ENCODE measurements at regions of chr20 and their contacts with region 1.

Region 1: GRCh38 chr20:33791959-33792597 is 19.1 kb upstream of the CHMP4B start:
- DNase-seq: peak in 2 of 5 donors; percentile 43 to 75
- ATAC-seq: peak in 1 of 4 donors; percentile 24
- H3K4me3 ChIP-seq: no peak overlapping the region
- H3K27ac ChIP-seq: peak overlapping the region in 8 of 12 donors; percentile 26 to 78 (median 60)
- H3K4me1 ChIP-seq: peaks cover 0 to 39% (median 28%) of the 10 kb centered on the region in 12 donors
- H3K27me3 ChIP-seq: no peaks in the 10 kb centered on the region
- CTCF ChIP-seq: peak; percentile 70 to 83 (median 78)
- POLR2A ChIP-seq: no peak

Region 2: GRCh38 chr20:33731693-33732165 is 60.3 kb before region 1 on chr20 and contains the start of gene ZNF341:
- intact Hi-C with region 1: no loop called
- DNase-seq: peak; percentile 88 to 94 (median 92)
- ATAC-seq: peak; percentile 72 to 91 (median 88)
- H3K4me3 ChIP-seq: peak within 1 kb of the TSS; percentile 47 to 71 (median 64)
- H3K27ac ChIP-seq: peak within 1 kb of the TSS; percentile 86 to 99 (median 92)
- H3K4me1 ChIP-seq: peaks cover 0 to 29% (median 20%) of the 10 kb centered on the region in 12 donors
- H3K27me3 ChIP-seq: no peaks in the 10 kb centered on the region
- CTCF ChIP-seq: peak; percentile 82 to 97 (median 90)
- POLR2A ChIP-seq: no peak
- total RNA-seq, gene ZNF341: 1.2 to 3.3 (median 1.5) TPM

Region 3: DNA sequence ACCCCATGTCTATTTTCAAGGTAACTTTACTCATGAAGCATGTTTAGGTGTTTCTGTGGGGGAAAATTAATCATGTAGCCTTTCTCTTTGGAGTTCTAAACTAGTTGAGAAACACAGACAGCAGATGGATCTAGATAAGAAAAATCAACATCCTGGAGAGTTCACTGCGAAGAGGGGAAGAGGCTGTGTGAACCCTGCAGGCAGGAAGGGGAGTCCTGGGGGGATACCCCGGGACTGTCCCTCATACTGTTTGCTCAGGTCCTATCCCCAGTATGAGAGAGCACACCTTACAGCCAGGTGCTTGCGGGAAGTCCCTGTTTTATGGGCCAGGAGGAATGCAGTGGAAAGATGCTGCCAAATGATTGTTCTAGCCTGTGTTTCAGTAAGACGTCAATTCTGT is 51.8 kb after region 1 on chr20:
- intact Hi-C with region 1: loop called in 1 of 10 experiments (anchors 10 kb)
- DNase-seq: peak in 1 of 5 donors; percentile 7
- ATAC-seq: peak in 1 of 4 donors; percentile 27
- H3K4me3 ChIP-seq: no peak overlapping the region
- H3K27ac ChIP-seq: peak overlapping the region in 1 of 12 donors; percentile 17
- H3K4me1 ChIP-seq: peaks cover 26 to 84% (median 75%) of the 10 kb centered on the region in 12 donors
- H3K27me3 ChIP-seq: no peaks in the 10 kb centered on the region
- CTCF ChIP-seq: no peak
- POLR2A ChIP-seq: no peak

Region 4: GRCh38 chr20:33853507-33853813 is 61.4 kb after region 1 on chr20:
- intact Hi-C with region 1: loop called in 3 of 10 experiments (anchors 5 to 10 kb)
- DNase-seq: no peak
- ATAC-seq: no peak
- H3K4me3 ChIP-seq: no peak overlapping the region
- H3K27ac ChIP-seq: no peak overlapping the region
- H3K4me1 ChIP-seq: peaks cover 0 to 7% (median 0%) of the 10 kb centered on the region in 12 donors
- H3K27me3 ChIP-seq: no peaks in the 10 kb centered on the region
- CTCF ChIP-seq: no peak
- POLR2A ChIP-seq: no peak

Region 5: DNA sequence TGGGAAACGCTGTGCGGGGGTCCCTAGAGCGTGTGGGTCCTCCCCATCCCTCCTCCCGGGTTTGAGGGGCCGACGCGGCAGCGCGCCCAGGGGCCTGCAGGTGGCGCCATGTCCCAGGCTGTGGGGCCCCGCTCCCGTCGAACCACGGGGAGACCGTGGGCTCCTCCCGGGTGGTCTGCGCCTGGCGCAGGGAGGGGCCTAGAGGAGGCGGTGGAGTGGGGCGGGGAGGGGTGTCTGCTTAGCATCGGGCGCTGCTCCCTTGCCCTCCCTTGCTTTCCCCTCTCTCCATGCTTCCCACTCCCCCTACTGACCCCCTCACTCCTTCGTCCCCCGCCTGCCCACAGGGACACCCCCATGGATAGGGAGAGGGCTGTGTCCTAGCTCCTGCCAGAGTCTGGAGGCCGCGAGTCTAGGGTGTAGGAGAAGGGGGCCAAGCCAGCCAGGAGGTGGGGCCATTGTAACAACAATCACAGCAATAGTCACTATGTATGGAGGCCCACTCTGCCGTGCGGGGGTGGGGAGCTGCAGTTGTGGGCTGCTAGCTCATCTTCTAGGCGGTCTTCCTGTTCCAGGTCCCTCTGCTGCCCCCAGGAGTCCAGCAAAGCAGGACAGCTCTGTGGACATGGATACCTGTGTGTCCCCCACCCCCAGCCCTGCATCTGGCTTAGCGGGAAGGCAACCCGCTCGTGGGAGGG is 70.8 kb after region 1 on chr20:
- intact Hi-C with region 1: loop called in 1 of 10 experiments (anchors 5 kb)
- DNase-seq: peak in 4 of 5 donors; percentile 33 to 53 (median 40)
- ATAC-seq: peak; percentile 55 to 83 (median 78)
- H3K4me3 ChIP-seq: peak overlapping the region in 5 of 12 donors; percentile 15 to 36 (median 16)
- H3K27ac ChIP-seq: no peak overlapping the region
- H3K4me1 ChIP-seq: peaks cover 0 to 25% (median 14%) of the 10 kb centered on the region in 12 donors
- H3K27me3 ChIP-seq: no peaks in the 10 kb centered on the region
- CTCF ChIP-seq: peak; percentile 49 to 76 (median 65)
- POLR2A ChIP-seq: no peak

Region 6: DNA sequence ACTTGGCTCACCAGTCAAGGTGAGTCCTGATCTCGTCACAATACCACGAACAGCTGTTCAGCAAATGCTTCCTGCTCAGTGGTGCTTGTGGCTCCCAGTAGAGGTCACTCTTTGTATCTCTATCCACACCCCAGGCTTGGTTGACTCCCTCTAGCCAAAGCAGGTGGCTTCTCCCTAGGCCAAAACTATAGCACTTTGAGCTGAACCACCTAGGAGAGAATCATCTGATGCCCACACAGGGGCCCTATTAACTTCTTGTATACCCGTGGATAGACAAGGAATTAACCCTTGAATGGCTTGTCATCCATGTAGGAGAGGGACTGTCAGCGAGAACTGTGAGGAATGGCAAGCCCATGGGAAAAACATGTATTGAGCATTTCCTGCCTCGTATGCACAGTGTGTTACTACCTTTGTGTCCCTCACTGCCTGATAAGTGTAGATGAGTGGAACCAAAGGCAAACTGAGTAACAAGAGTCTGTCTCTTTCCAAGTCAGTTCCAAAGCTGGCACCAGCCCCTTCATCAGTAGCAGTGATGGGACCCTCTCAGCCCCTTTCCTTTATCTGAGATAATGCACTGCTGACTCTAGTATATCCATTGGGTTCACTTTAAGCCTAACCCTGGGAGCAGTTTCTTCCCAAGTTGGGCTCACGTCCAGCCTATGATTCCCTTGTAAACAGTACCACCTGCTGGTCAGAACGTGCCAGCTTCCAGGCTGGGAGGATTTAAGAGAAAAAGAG is 277.4 kb after region 1 on chr20:
- intact Hi-C with region 1: loop called in 4 of 10 experiments (anchors 2 to 10 kb)
- DNase-seq: peak; percentile 50 to 74 (median 71)
- ATAC-seq: peak; percentile 72 to 91 (median 86)
- H3K4me3 ChIP-seq: no peak overlapping the region
- H3K27ac ChIP-seq: peak overlapping the region in 1 of 12 donors; percentile 7
- H3K4me1 ChIP-seq: peaks cover 0 to 50% (median 28%) of the 10 kb centered on the region in 12 donors
- H3K27me3 ChIP-seq: no peaks in the 10 kb centered on the region
- CTCF ChIP-seq: peak; percentile 75 to 93 (median 87)
- POLR2A ChIP-seq: no peak